ENCODE measurements at regions of chr16 and their contacts with region 1.

Region 1: DNA sequence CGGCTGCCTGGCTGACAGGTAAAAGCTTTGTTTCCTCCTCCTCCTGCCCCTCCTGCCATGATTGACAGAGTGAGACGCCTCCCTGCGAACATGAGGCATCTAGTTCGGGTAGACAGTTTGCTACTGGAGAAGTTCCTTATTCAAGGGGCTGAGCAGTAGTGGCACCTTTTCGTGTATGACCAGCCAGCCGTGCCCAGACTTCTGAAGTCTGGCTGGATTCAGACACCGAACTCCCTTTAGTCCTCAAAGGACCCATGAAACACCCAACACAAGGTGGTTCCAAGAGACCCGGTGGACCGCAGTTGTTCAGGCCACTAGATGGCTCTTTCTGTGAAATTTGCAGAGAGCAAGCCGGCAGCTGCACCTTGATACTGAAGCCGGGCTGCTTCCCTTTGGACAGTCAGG is 192.8 kb downstream of the XYLT1 start:
- DNase-seq: no peak
- H3K4me3 Mint-ChIP-seq: no peak overlapping the region
- H3K27ac Mint-ChIP-seq: no peak overlapping the region
- H3K4me1 Mint-ChIP-seq: peaks cover 33% of the 10 kb centered on the region
- H3K27me3 Mint-ChIP-seq: no peaks in the 10 kb centered on the region

Region 2: DNA sequence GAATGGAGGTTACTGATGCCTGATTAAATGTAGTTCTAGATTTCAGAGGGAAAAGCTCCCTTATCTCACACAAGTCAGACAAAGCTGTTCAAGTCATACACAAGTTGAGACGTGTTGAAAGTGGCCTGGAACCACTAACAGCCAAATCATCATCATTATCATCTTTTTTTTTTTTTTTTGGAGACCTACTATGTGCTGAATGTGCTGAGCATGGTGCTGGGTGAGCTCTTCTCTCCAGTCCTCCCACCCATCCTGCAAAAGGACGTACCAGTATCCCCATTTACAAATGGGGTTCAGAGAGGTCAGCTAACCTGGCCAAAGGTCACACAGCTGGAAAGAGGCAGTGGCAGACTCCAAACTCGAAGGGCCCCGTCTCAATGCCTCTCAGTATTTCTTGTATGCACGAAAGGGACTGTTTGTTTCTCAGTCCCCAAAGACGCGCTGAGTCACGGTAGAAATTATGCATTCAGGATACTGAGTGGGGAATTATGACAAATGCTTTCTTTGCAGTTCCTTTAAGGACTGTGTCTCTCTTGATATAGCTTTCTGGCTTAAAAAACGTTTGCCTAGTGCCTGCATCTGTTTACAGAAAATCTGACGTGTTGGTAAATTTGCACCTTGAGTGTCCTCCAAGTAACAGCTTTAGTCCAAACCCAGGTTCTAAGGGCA is 42.7 kb before region 1 on chr16:
- CTCF ChIA-PET with region 1: no interaction called
- POLR2A ChIA-PET with region 1: no interaction called
- intact Hi-C with region 1: no loop called
- DNase-seq: no peak
- H3K4me3 Mint-ChIP-seq: no peak overlapping the region
- H3K27ac Mint-ChIP-seq: no peak overlapping the region
- H3K4me1 Mint-ChIP-seq: peaks cover 26% of the 10 kb centered on the region
- H3K27me3 Mint-ChIP-seq: no peaks in the 10 kb centered on the region

Region 3: DNA sequence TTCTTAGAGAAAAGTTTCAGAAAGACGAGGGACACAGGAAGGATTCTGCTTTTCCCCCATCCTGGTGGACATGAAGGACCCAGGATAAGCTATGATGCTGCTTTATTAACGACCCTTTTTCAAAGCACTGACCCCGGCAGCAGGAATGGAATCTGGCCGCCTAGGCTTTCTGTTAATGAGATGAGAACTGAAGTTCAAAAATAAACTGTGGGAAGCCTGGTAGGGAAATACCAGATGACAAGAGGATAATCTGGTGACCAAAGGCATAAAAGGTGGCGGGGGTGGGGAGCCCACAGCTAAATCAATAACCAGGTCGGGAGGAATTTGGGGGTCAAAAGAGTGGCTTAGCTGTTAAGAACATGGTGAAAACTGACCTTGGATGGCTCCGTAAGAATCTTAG is 21.8 kb after region 1 on chr16:
- CTCF ChIA-PET with region 1: no interaction called
- POLR2A ChIA-PET with region 1: no interaction called
- intact Hi-C with region 1: no loop called
- DNase-seq: no peak
- H3K4me3 Mint-ChIP-seq: no peak overlapping the region
- H3K27ac Mint-ChIP-seq: no peak overlapping the region
- H3K4me1 Mint-ChIP-seq: peaks cover 22% of the 10 kb centered on the region
- H3K27me3 Mint-ChIP-seq: no peaks in the 10 kb centered on the region

Region 4: DNA sequence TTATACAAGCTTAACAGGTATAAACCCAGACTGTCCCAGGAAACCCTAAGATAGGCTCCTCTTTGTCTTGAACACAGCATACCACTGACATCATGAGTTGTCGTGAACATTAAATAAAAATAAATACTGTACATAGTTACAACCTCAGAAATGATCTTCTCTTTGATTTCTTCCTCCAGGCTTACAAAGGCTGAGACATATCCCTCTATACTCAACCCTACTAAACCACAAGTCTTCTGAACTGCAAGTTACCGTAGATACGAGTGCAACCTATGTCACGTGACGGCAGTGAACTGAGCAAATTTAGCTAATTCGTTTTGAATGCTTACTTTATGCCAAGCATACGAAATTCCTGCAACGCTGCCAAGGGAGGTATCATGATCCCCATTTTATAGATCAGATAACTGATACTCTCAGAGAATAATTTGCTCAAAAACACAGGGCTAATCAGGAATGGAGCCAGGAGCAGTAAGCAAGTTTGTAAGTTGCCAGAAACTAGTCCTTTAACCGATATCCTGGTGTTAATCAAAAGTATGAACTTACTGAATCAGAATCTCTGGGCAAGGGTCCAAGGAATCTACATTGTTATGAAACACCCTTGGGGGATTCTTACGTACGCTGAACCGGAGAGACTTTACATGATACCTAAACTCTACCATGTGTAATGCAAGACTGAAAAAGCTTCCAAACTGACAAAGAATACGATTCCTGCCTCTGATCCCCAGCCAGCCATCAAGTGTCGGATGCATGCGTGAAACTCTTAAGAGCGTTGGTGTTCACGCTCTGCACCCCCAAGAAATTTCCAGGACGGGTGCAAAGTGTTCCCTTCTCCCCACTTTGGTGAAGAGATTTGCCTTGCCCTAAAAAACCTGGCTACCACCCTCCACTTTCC is 86.6 kb after region 1 on chr16:
- CTCF ChIA-PET with region 1: interaction called, 3 read pairs
- POLR2A ChIA-PET with region 1: interaction called, 3 read pairs
- intact Hi-C with region 1: loop called (anchors 5 kb)
- DNase-seq: peak; percentile 72
- H3K4me3 Mint-ChIP-seq: peak overlapping the region; percentile 48
- H3K27ac Mint-ChIP-seq: peak overlapping the region; percentile 83
- H3K4me1 Mint-ChIP-seq: peaks cover 95% of the 10 kb centered on the region
- H3K27me3 Mint-ChIP-seq: no peaks in the 10 kb centered on the region

Region 5: DNA sequence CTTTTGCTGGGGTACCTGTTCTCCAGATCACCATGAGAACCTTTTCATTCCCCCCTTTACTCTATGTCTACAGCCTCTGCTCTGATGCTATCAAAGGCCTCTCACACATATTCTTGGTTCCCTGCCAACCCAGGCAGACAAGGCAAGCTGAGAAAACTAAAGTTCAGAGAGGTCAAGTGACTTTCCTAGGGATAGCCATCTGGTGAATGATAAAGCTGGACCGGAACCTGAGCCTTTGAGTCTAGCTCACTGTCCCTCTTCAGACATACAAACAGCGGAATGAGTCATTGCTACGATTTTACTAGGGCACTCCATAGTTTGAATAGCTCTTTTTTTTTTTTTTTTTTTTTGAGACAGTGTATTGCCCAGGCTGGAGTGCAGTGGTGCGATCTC is 119.5 kb after region 1 on chr16:
- CTCF ChIA-PET with region 1: no interaction called
- POLR2A ChIA-PET with region 1: no interaction called
- intact Hi-C with region 1: no loop called
- DNase-seq: no peak
- H3K4me3 Mint-ChIP-seq: no peak overlapping the region
- H3K27ac Mint-ChIP-seq: peak overlapping the region; percentile 72
- H3K4me1 Mint-ChIP-seq: peaks cover 42% of the 10 kb centered on the region
- H3K27me3 Mint-ChIP-seq: no peaks in the 10 kb centered on the region

Measured in activated CD4-positive, alpha-beta memory T cell treated with anti-CD3 and anti-CD28 coated beads for 36 hours (primary cell).